ENCODE measurements at regions of chr9 and their contacts with region 1.

Region 1: DNA sequence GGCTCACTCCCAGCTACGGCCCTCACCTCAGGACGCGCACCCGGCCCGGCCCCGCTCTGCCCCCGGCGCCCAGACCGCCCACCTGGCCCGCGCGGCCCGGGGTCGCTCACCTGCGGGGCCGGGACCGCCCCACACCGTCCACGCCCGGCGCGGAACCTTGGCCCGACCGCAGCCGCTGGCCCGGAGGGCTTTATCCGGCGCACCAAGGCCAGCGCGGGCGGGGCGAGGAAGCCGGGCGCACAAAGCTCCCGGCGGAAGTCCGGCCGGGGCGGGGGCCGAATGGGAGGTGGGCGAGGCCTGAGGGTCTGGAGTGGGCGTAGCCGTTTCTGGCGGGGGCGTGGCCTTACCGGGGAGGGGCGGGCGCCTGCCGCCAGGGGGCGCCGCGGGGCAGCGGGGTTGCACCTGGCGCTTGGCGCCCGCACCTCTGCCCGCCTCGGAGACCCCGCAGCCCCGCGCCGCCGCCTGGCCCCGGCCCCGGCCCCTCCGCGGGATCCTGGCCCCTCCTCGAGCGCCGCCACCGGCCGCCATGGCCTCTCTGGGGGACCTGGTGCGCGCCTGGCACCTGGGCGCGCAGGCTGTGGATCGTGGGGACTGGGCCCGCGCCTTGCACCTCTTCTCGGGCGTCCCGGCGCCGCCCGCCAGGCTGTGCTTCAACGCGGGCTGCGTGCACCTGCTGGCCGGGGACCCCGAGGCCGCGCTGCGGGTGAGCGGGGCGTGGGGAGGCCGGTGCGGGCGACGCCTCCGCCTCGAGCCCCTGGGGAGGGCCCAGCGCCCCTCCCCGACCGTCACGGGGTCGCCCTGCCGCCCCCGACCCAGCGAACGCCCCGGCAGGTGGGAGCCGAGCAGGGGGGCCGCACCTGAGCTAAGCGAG is at the starts of genes EXD3 and NOXA1:
- DNase-seq: peak; percentile 96
- H3K4me3 Mint-ChIP-seq: peak within 1 kb of the TSS; percentile 78
- H3K27ac Mint-ChIP-seq: peak within 1 kb of the TSS; percentile 50
- H3K4me1 Mint-ChIP-seq: peaks cover 15% of the 10 kb centered on the region
- H3K27me3 Mint-ChIP-seq: peaks cover 7% of the 10 kb centered on the region
- total RNA-seq, gene EXD3: 17.9 to 18.1 TPM
- total RNA-seq, gene NOXA1: 0.50 to 0.73 TPM

Region 2: DNA sequence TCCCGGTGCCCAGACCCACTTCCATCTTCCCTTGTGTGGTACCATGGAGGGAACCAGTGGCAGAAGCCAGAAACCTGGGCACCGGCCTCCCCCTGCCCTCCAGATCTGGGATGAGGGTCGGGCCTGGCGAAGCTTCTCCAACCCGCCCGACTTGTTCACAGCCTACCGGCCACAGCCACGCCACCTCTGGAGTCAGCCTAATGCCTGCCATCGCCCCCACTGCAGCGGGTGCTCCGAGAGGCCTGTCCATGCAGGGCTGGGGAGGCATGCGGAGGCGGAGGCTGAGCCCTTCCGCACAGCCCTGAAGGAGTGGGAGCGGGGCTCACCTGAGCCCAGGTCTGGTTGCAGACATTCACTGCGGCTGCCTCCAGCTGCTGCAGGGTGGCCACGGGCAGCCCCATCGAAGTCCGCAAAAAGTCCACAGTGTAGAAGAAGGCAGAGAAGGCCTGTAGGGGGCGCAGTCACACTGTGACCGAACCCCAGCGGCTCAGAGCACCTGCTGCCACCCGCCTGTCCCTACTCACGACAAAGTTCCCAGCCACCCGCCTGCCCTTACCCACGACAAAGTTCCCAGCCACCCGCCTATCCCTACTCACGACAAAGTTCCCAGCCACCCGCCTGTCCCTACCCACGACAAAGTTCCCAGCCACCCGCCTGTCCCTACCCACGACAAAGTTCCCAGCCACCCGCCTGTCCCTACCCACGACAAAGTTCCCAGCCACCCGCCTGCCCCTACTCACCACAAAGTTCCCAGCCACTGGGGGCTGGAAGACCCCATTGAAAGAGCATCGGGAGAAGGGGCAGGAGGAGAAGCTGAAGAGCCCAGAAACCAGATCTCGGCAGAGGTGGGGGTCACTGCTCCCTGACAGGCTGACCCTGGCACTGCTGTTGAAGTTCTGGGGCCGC is 373.4 kb before region 1 on chr9:
- CTCF ChIA-PET with region 1: no interaction called
- POLR2A ChIA-PET with region 1: no interaction called
- DNase-seq: peak; percentile 75
- H3K4me3 Mint-ChIP-seq: no peak overlapping the region
- H3K27ac Mint-ChIP-seq: no peak overlapping the region
- H3K4me1 Mint-ChIP-seq: peaks cover 14% of the 10 kb centered on the region
- H3K27me3 Mint-ChIP-seq: peaks cover 44% of the 10 kb centered on the region

Region 3: DNA sequence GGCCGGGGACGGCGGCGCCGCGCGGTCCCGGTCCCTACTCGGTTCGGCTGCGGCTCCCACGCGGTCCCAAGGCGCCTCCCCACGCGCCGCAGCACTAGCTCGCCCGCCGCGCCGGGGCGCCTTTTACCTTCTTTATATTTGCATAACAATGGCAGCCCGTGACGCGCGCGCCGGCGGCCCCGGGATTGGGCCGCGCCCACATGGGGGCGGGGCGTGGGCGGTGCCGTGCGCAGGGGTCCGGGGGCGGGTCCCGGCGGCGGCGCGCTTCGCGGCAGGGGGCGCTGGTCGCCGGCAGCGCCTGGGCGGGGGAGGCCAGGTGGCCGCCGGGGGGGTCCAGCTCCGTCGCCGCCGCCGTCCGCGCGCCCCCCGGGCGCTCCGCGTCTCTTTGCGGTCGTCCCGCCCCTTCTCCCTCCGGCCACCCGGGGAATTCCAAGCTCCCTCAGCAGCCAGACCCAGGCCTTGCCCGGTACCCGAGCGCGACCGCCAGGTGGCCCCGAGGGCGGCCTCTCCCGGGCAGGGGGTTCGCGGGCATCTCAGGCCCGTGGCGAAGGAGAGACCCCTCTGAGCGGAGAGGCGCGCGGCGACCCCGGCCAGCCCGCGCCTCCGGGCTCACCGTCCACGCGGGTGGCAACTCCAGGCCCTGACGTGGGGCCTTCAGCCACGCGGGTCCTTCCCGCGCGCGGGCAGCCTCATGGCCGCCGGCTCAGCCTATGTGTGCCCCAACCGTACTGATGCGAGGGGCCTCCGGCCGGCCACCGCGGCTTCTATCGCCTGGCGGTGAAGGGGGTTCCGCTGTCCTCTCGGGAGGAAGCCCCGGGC is 120.9 kb before region 1 on chr9 and contains the start of gene NRARP:
- CTCF ChIA-PET with region 1: interaction called, 5 read pairs
- POLR2A ChIA-PET with region 1: interaction called, 10 read pairs
- DNase-seq: peak; percentile 90
- H3K4me3 Mint-ChIP-seq: peak within 1 kb of the TSS; percentile 48
- H3K27ac Mint-ChIP-seq: no peak within 1 kb of the TSS
- H3K4me1 Mint-ChIP-seq: peaks cover 19% of the 10 kb centered on the region
- H3K27me3 Mint-ChIP-seq: peaks cover 29% of the 10 kb centered on the region
- total RNA-seq, gene NRARP: 0.71 to 0.75 TPM

Region 4: DNA sequence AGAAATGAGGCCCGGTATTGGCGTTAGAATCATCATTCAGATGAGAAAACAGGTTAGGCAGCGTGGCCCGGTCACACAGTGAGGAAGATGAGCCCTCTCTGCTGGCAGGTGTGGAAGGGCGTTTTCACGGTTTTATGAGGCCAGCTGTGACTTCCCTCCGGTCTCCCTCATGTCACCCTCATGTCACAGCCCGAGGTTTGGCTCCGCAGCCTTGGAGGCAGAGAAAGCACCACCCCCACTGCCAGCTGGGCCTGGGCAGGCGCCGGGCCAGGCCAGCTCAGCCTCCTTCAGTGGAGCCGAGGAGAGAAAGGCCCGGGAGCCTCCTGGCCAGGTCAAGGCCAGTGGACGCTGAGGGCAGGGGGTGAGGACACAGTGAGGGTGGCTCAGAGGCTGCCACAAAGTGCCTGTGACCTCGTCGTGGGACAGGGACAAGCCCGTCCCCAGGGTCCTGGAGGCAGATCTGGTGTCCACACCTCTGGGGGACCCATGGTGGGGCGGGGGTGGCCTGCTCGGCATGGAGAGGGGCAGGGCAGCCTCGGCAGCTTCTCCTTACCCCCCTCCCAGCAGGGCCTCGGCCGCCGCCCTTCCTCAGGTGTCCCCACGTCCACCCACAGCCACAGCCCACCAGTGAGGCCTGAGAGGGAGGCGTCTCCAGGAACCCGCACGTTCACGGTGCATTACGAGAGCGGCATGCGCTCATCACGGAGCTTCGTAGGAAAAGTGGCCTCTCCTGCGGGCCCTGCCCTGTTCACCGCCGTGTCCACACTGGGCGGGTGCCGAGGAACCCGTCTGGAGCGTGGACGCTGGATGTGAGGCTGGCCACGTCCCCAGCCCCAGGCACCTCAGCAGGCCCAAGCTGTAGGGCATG is 32.5 kb before region 1 on chr9:
- CTCF ChIA-PET with region 1: no interaction called
- POLR2A ChIA-PET with region 1: no interaction called
- DNase-seq: no peak
- H3K4me3 Mint-ChIP-seq: no peak overlapping the region
- H3K27ac Mint-ChIP-seq: no peak overlapping the region
- H3K4me1 Mint-ChIP-seq: peaks cover 11% of the 10 kb centered on the region
- H3K27me3 Mint-ChIP-seq: no peaks in the 10 kb centered on the region

Region 5: DNA sequence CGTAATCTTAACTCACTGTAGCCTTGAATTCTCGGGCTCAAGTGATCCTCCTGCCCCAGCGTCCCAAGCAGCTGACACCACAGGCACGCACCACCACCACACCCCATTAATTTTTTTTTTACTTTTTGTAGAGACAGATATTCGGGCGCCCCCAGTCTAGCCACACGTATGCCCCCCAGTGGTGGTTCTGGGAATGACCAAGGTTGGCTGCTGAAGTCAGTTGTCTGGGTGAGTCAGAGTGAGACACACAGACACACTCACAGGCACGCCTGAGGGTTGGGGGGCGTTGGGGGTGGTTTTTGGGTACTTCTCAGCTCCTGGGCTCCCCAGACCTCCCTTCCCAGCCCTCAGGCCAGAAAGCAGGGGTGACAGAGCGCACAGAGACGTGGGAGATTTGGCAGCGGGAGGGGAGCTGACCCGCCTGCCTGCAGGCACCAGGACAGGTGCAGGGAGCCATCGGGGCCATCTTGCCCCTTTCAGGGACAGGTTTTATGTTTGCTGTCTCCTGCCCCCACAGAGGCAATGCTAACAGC is 22.1 kb after region 1 on chr9:
- CTCF ChIA-PET with region 1: interaction called, 19 read pairs
- POLR2A ChIA-PET with region 1: interaction called, 15 read pairs
- DNase-seq: peak; percentile 88
- H3K4me3 Mint-ChIP-seq: no peak overlapping the region
- H3K27ac Mint-ChIP-seq: no peak overlapping the region
- H3K4me1 Mint-ChIP-seq: peaks cover 15% of the 10 kb centered on the region
- H3K27me3 Mint-ChIP-seq: peaks cover 15% of the 10 kb centered on the region

Region 6: DNA sequence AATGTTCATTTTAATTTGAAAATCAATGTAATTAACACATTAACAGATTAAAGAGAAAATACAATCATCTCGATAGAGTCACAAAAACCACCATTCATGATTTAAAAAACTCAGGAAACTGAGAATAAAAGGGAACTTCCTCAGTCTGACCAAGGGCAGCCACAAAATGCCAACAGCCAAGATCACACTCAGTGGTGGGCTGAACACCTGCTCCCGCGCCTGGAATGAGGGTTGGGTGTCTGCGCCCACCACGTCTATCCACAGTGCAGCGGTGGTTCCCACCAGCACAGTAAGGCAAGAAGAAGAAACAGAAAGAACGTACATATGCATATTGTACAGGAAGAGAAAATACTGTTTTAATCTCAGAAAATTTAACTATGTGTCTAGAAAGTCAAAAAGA is 47.5 kb after region 1 on chr9:
- CTCF ChIA-PET with region 1: interaction called, 10 read pairs
- POLR2A ChIA-PET with region 1: no interaction called
- DNase-seq: no peak
- H3K4me3 Mint-ChIP-seq: no peak overlapping the region
- H3K27ac Mint-ChIP-seq: no peak overlapping the region
- H3K4me1 Mint-ChIP-seq: peaks cover 11% of the 10 kb centered on the region
- H3K27me3 Mint-ChIP-seq: peaks cover 15% of the 10 kb centered on the region

Region 7: GRCh38 chr9:137578518-137579258 is 155.4 kb after region 1 on chr9 and contains the start of gene DPH7:
- CTCF ChIA-PET with region 1: no interaction called
- POLR2A ChIA-PET with region 1: no interaction called
- DNase-seq: peak; percentile 96
- H3K4me3 Mint-ChIP-seq: peak within 1 kb of the TSS; percentile 78
- H3K27ac Mint-ChIP-seq: peak within 1 kb of the TSS; percentile 65
- H3K4me1 Mint-ChIP-seq: peaks cover 37% of the 10 kb centered on the region
- H3K27me3 Mint-ChIP-seq: no peaks in the 10 kb centered on the region
- total RNA-seq, gene DPH7: 31.9 to 34.2 TPM

Measured in activated CD4-positive, alpha-beta memory T cell treated with anti-CD3 and anti-CD28 coated beads, Interleukin-2, amount 10 ng/mL, durations not matched to agents 7 days and 5 days (primary cell).